ENCODE measurements at regions of chr15 and their contacts with region 1.

Region 1: GRCh38 chr15:64046347-64047153 is at the start of gene DAPK2:
- DNase-seq: peak; percentile 52 to 75
- H3K4me3 ChIP-seq: peak within 1 kb of the TSS; percentile 50 to 57
- H3K27ac ChIP-seq: peak within 1 kb of the TSS in 1 of 2 donors; percentile 21
- H3K4me1 ChIP-seq: peaks cover 0 to 26% (median 8%) of the 10 kb centered on the region in 4 donors
- H3K27me3 ChIP-seq: peaks cover 0 to 8% of the 10 kb centered on the region in 2 donors
- CTCF ChIP-seq: peak; percentile 74 to 81

Region 2: GRCh38 chr15:63905558-63906265 is 140.8 kb before region 1 on chr15:
- intact Hi-C with region 1: no loop called
- DNase-seq: peak in 1 of 2 donors; percentile 24
- H3K4me3 ChIP-seq: no peak overlapping the region
- H3K27ac ChIP-seq: no peak overlapping the region
- H3K4me1 ChIP-seq: peaks cover 0 to 17% (median 13%) of the 10 kb centered on the region in 4 donors
- H3K27me3 ChIP-seq: no peaks in the 10 kb centered on the region
- CTCF ChIP-seq: no peak

Region 3: GRCh38 chr15:63945007-63945788 is 101.4 kb before region 1 on chr15:
- intact Hi-C with region 1: loop called (anchors 5 kb)
- DNase-seq: peak; percentile 59 to 79
- H3K4me3 ChIP-seq: no peak overlapping the region
- H3K27ac ChIP-seq: no peak overlapping the region
- H3K4me1 ChIP-seq: peaks cover 0 to 18% (median 7%) of the 10 kb centered on the region in 4 donors
- H3K27me3 ChIP-seq: no peaks in the 10 kb centered on the region
- CTCF ChIP-seq: peak; percentile 84 to 90

Region 4: DNA sequence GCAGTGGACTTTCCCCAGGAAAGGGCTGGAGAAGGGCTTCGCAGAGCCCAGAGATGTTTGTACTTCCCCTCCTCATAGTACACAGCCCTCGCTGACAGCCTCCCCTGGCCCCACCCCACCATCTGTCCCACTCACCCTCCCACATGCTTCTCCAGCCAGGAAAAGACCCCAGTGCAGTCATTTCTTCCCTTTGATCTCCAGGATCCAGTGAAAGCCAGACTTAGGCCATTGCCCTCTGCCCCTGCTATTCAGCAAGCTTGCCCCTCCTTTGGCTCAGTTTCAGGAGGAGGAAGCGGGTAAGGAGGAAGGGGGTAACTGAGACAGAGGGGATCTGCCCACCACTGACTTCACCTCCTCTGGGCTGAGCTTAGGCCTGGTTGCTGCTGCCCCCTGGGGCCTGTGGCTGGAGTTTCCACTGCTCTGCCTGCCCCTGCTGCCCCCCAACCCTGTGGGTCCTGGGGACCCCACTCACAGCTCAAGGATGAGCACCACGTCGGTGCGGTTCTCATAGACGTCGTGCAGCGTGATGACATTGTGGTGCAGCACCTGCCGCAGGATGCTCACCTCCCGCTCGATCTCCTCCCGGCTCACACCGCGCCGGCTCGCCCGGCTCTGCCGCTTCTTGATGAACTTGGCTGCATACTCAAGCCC is 63.4 kb before region 1 on chr15:
- intact Hi-C with region 1: no loop called
- DNase-seq: no peak
- H3K4me3 ChIP-seq: no peak overlapping the region
- H3K27ac ChIP-seq: no peak overlapping the region
- H3K4me1 ChIP-seq: peaks cover 0 to 30% (median 20%) of the 10 kb centered on the region in 4 donors
- H3K27me3 ChIP-seq: no peaks in the 10 kb centered on the region
- CTCF ChIP-seq: no peak